Ascending aorta (tissue), 2 donors: ENCODE measurements at regions of chr6 and their contacts with region 1.

Region 1: DNA sequence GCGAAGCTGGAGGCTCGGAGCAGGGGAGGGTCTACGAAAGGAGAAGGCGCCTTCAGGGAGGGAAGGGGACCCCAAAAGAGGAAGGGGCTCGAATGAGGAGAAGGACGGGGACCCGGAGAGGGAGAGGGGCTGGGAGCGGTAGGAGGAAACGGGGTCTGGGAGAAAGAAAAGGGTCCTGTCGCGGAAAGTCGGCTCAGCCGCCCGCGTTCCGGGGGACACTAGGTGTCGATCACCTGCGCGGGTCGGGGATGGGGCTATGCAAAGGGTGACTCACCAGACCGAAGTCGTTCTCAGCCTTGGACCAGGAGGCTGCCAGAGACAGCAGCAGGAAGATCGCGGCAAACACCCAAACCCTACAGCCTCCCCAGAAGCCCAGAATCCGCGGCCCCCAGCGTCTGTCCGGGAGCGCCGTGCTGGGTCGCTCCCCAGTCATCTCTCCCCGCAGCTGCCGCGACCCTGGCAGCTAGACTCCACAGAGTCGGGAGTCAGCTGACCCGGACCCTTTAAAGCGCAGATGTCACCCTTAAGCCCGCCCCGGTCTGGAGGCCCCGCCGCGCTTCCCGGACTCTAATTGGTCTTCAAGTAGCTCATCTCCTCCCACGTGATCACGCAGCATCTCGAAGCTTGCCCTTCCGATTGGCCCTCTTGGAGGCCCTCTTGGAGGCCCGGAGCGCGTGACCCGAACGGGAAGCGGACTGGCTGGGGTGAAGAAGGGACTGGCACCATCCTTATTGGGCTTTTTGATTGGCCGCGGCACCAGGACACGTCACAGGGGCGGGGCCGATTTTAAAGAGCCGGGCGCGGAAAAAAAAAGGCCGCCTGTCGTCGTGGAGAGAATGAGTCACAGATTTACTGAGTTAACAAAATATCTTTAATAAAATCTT is at the start of gene NEU1:
- DNase-seq: peak; percentile 100
- H3K4me3 ChIP-seq: peak within 1 kb of the TSS; percentile 60 to 88
- H3K27ac ChIP-seq: peak within 1 kb of the TSS; percentile 89 to 93
- H3K4me1 ChIP-seq: peaks cover 0 to 13% of the 10 kb centered on the region in 2 donors
- H3K27me3 ChIP-seq: no peaks in the 10 kb centered on the region
- CTCF ChIP-seq: no peak
- total RNA-seq, gene NEU1: 21.6 TPM

Region 2: DNA sequence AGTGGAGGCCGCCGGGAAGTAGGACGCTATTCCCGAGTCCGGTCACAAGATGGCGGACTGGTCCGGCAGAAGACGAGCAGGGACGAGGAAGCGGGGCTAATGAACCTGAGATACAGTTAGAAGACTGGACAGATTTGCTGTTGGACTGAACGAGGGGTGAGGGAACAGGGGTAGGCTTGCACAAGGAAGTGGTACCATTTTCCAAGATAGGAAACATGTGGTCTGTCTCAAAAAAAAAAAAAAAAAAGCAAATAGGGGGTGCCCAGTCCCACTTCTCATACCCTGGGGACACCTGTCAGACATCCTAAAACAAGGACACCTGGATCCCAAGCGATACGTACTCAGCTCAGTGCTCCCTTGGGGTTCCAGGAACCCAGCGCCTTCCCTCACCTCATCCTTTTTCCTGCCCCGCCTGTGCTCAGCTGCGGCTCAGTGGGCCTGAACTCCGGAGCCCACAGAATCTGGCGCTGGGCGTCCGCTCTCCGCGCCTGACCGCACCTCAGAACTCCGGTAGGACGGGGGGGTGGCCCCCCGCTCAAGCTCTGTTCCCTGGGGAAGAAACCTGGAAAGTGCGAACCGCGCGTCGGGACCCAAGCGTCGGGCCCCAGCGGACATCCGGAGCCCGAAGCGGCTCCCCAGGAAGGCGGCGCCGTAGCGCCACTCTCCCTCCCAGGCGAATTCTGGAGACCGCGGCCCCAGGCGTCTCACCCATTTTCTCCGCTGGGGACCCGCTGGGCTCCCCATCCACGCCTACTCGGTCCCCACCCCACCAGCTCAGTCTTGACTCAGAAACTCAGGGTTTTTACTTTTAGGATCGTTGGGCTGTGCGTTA is 181.5 kb before region 1 on chr6 and contains the start of gene LY6G5C:
- intact Hi-C with region 1: loop called (anchors 2 kb)
- DNase-seq: peak; percentile 47 to 91
- H3K4me3 ChIP-seq: peak within 1 kb of the TSS; percentile 62 to 86
- H3K27ac ChIP-seq: peak within 1 kb of the TSS; percentile 62 to 64
- H3K4me1 ChIP-seq: peaks cover 2 to 5% of the 10 kb centered on the region in 2 donors
- H3K27me3 ChIP-seq: no peaks in the 10 kb centered on the region
- CTCF ChIP-seq: peak; percentile 81 to 83 (median 82)
- total RNA-seq, gene LY6G5C: 0.96 TPM

Region 3: GRCh38 chr6:31692353-31692752 is 170.2 kb before region 1 on chr6:
- intact Hi-C with region 1: no loop called
- DNase-seq: no peak
- H3K4me3 ChIP-seq: no peak overlapping the region
- H3K27ac ChIP-seq: no peak overlapping the region
- H3K4me1 ChIP-seq: no peaks in the 10 kb centered on the region
- H3K27me3 ChIP-seq: no peaks in the 10 kb centered on the region
- CTCF ChIP-seq: no peak

Region 4: GRCh38 chr6:31702819-31703522 is 159.6 kb before region 1 on chr6 and contains the start of gene ABHD16A:
- intact Hi-C with region 1: loop called (anchors 2 kb)
- DNase-seq: peak; percentile 97 to 100
- H3K4me3 ChIP-seq: peak within 1 kb of the TSS; percentile 72 to 78
- H3K27ac ChIP-seq: peak within 1 kb of the TSS; percentile 92 to 97
- H3K4me1 ChIP-seq: peaks cover 13 to 21% of the 10 kb centered on the region in 2 donors
- H3K27me3 ChIP-seq: no peaks in the 10 kb centered on the region
- CTCF ChIP-seq: no peak
- total RNA-seq, gene ABHD16A: 28.0 TPM

Region 5: GRCh38 chr6:31795616-31796298 is 66.8 kb before region 1 on chr6 and contains the start of gene VARS1:
- intact Hi-C with region 1: loop called (anchors 2 kb)
- DNase-seq: peak; percentile 72 to 94
- H3K4me3 ChIP-seq: peak within 1 kb of the TSS; percentile 81 to 83
- H3K27ac ChIP-seq: peak within 1 kb of the TSS; percentile 88 to 92
- H3K4me1 ChIP-seq: peaks cover 4 to 18% of the 10 kb centered on the region in 2 donors
- H3K27me3 ChIP-seq: no peaks in the 10 kb centered on the region
- CTCF ChIP-seq: peak; percentile 71 to 97 (median 89)
- total RNA-seq, gene VARS1: 48.3 TPM

Region 6: GRCh38 chr6:31834434-31835198 is 28.0 kb before region 1 on chr6:
- intact Hi-C with region 1: loop called (anchors 1 kb)
- DNase-seq: peak in 1 of 2 donors; percentile 91
- H3K4me3 ChIP-seq: peak overlapping the region; percentile 67 to 80
- H3K27ac ChIP-seq: peak overlapping the region; percentile 84 to 90
- H3K4me1 ChIP-seq: peaks cover 21 to 43% of the 10 kb centered on the region in 2 donors
- H3K27me3 ChIP-seq: no peaks in the 10 kb centered on the region
- CTCF ChIP-seq: no peak

Region 7: GRCh38 chr6:31901953-31902643 is 39.5 kb after region 1 on chr6 and contains the start of gene ZBTB12:
- intact Hi-C with region 1: loop called (anchors 2 kb)
- DNase-seq: peak; percentile 63 to 94
- H3K4me3 ChIP-seq: peak within 1 kb of the TSS; percentile 79 to 88
- H3K27ac ChIP-seq: peak within 1 kb of the TSS; percentile 77
- H3K4me1 ChIP-seq: peaks cover 6 to 7% of the 10 kb centered on the region in 2 donors
- H3K27me3 ChIP-seq: no peaks in the 10 kb centered on the region
- CTCF ChIP-seq: no peak
- total RNA-seq, gene ZBTB12: 7.3 TPM